ENCODE measurements at regions of chr1 and their contacts with region 1.

Region 1: GRCh38 chr1:160830321-160831153 is 32.1 kb downstream of the CD244 start:
- DNase-seq: peak; percentile 67 to 89 (median 76)
- ATAC-seq: peak; percentile 84
- H3K4me3 ChIP-seq: no peak overlapping the region
- H3K4me3 Mint-ChIP-seq: no peak overlapping the region
- H3K27ac ChIP-seq: no peak overlapping the region
- H3K27ac Mint-ChIP-seq: peak overlapping the region; percentile 81
- H3K4me1 ChIP-seq: peaks cover 17% of the 10 kb centered on the region
- H3K4me1 Mint-ChIP-seq: peaks cover 35% of the 10 kb centered on the region
- H3K27me3 ChIP-seq: no peaks in the 10 kb centered on the region
- H3K27me3 Mint-ChIP-seq: no peaks in the 10 kb centered on the region
- CTCF ChIP-seq: peak; percentile 87

Region 2: DNA sequence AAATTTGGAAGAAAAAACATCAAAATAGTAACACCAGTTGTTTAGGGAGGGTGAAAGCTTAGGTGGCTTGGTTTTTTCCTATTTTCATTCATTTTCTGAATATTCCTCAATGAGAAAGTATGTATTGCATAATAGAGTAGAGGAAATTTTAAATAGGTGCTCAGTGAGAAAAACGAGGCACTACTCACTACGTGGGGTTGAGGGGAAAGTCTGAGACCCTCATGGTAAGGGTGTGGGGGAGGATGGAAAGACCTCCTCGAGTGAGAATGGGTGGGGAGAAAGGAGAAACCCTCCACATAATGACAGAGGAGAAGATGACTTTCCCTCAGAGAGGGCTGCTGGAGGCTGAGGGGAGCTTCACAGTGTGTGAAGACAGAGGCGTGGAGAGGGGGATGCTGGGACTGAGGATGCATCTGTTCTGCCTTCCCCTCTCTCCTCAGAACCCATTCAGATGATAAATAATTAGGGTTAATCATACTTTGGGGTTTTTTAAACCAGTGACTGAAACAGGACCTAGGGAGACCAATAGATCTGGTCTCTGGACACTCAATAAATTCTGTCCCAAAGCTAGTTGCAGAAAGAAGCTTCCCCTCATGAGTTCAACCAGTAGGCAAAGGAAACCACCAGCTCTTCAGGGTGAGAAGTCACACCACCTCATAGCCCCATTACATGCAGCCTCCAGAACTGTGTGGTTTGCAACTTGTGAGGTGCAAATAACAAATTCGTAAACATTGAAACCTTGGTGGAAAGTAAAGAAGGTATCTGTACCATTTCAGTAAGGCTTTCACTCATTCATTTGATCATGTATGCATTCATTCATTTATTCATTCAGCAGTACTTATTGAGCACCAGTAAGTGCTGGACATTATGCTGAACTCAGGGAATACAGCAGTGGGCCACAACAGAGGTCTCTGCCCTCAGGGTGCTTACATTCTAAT is 74.4 kb before region 1 on chr1:
- CTCF ChIA-PET with region 1: no interaction called
- POLR2A ChIA-PET with region 1: no interaction called
- intact Hi-C with region 1: no loop called
- DNase-seq: peak in 3 of 14 experiments; percentile 56 to 82 (median 59)
- ATAC-seq: peak; percentile 26
- H3K4me3 ChIP-seq: no peak overlapping the region
- H3K4me3 Mint-ChIP-seq: no peak overlapping the region
- H3K27ac ChIP-seq: no peak overlapping the region
- H3K27ac Mint-ChIP-seq: no peak overlapping the region
- H3K4me1 ChIP-seq: peaks cover 17% of the 10 kb centered on the region
- H3K4me1 Mint-ChIP-seq: peaks cover 4% of the 10 kb centered on the region
- H3K27me3 ChIP-seq: no peaks in the 10 kb centered on the region
- H3K27me3 Mint-ChIP-seq: no peaks in the 10 kb centered on the region
- CTCF ChIP-seq: no peak

Region 3: DNA sequence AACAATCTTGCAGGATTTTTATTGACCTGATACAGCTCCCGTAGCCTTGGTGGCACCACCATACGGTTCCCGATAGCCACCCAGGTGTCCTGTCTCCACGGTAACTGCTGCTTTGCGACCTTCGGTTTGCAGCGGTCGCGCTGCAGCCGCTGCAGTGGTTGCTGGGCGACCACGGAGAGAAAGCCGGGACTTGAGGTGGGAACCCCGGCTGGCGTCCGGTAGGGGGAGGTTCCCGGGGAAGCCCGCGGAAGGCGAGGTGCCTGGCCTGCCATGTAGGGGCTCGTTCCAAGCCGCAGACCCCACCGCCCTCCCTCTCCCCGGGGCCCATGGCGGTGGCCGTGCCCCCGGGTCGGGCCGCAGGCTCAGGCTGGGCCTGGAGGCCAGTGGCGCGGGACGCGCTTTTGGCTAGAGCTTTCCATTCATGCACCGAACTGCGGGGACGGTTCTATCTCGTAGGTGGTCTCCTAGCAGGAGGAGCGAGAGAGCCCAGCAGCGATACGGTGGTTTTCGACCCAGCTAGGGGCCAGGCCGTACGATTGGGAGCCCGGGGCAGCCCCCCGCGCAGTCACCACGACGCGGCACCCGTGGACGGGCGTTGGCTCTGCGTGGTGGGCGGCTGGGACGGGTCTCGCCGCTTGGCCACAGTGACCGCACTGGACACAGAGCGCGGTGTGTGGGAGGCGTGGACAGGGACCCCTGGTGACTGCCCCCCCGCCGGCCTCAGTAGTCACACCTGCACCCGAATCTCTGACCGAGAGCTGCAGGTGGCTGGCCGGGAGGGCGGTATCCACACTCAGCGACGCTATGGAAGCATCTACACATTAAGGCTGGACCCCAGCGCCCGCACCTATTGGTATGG is 267.9 kb after region 1 on chr1 and contains the start of gene KLHDC9:
- CTCF ChIA-PET with region 1: interaction called, 5 read pairs
- POLR2A ChIA-PET with region 1: no interaction called
- intact Hi-C with region 1: loop called (anchors 5 to 10 kb)
- DNase-seq: peak; percentile 38 to 88 (median 58)
- ATAC-seq: peak; percentile 50
- H3K4me3 ChIP-seq: peak within 1 kb of the TSS; percentile 51
- H3K4me3 Mint-ChIP-seq: peak within 1 kb of the TSS; percentile 87
- H3K27ac ChIP-seq: peak within 1 kb of the TSS in 1 of 2 donors; percentile 52
- H3K27ac Mint-ChIP-seq: peak within 1 kb of the TSS; percentile 90
- H3K4me1 ChIP-seq: peaks cover 22% of the 10 kb centered on the region
- H3K4me1 Mint-ChIP-seq: peaks cover 23% of the 10 kb centered on the region
- H3K27me3 ChIP-seq: no peaks in the 10 kb centered on the region
- H3K27me3 Mint-ChIP-seq: peaks cover 6% of the 10 kb centered on the region
- CTCF ChIP-seq: peak; percentile 29
- total RNA-seq, gene KLHDC9: 0.41 TPM in 1 of 2 experiments, not detected in the other